ENCODE measurements at regions of chr17 and their contacts with region 1.

Region 1: DNA sequence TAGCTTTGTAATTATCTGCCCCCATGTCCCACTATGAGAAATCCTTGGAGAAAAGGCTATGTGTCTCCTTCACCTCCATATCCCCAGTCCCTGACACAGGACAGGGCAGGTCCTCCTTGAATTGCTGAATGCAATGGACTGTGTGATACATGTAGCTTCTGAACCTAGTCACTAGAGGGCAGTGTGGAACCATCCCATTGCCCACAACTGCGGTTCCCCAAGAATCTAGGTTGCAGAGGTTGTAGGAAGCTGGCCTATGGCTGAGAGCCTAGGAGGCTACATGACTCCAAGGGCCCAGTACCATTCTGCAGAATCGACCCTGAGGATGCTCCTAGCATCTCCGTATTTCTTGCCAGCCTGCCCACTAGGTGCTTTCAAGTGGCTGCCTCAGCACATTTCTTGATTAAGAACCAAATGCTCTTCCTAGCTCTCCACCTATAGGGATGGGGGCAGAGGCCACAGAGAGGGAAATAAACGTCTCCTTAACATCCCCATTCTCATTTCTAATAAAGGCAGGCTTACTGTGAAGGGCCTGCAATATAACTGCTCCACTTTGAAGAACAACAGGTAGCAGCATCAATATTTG is 394.0 kb downstream of the CA10 start:
- DNase-seq: peak; percentile 76
- H3K4me3 ChIP-seq: no peak overlapping the region
- H3K27ac ChIP-seq: no peak overlapping the region
- H3K4me1 ChIP-seq: peaks cover 0 to 3% of the 10 kb centered on the region in 2 experiments; a peak in 1 of 4 replicates
- H3K27me3 ChIP-seq: no peaks in the 10 kb centered on the region
- CTCF ChIP-seq: peak; percentile 96
- EP300 ChIP-seq: no peak
- RAD21 ChIP-seq: peak; percentile 97

Region 2: DNA sequence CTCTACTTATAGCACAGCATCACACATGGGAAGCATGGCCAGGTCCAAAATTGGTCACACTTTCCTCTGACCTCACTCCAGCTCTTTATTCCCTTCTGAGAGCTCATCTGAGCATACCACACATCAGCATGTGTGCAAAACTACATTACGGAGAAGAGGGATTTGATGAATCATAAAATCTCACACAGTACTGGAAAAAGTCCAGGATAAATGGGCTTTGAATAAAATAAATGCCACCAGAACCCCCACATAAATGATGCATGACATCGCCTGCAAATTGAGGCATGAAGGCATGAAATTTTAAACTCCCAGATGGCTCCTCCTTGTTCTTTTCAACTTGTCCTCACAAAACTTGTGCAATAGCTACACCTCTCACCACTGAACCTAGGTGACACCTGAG is 45.5 kb before region 1 on chr17:
- CTCF ChIA-PET with region 1: no interaction called
- POLR2A ChIA-PET with region 1: no interaction called
- DNase-seq: no peak
- H3K4me3 ChIP-seq: no peak overlapping the region
- H3K27ac ChIP-seq: no peak overlapping the region
- H3K4me1 ChIP-seq: peaks cover 0 to 3% of the 10 kb centered on the region in 2 experiments; a peak in 1 of 4 replicates
- H3K27me3 ChIP-seq: no peaks in the 10 kb centered on the region
- CTCF ChIP-seq: no peak
- EP300 ChIP-seq: no peak
- RAD21 ChIP-seq: no peak

Region 3: GRCh38 chr17:51748749-51749539 is 15.5 kb before region 1 on chr17:
- CTCF ChIA-PET with region 1: interaction called, 37 read pairs
- POLR2A ChIA-PET with region 1: no interaction called
- DNase-seq: no peak
- H3K4me3 ChIP-seq: no peak overlapping the region
- H3K27ac ChIP-seq: no peak overlapping the region
- H3K4me1 ChIP-seq: peaks cover 0 to 6% of the 10 kb centered on the region in 2 experiments; a peak in 2 of 4 replicates
- H3K27me3 ChIP-seq: no peaks in the 10 kb centered on the region
- CTCF ChIP-seq: no peak
- EP300 ChIP-seq: no peak
- RAD21 ChIP-seq: no peak

Region 4: GRCh38 chr17:51793686-51794085 is 29.2 kb after region 1 on chr17:
- CTCF ChIA-PET with region 1: interaction called, 11 read pairs
- POLR2A ChIA-PET with region 1: no interaction called
- DNase-seq: no peak
- H3K4me3 ChIP-seq: no peak overlapping the region
- H3K27ac ChIP-seq: no peak overlapping the region
- H3K4me1 ChIP-seq: no peaks in the 10 kb centered on the region
- H3K27me3 ChIP-seq: no peaks in the 10 kb centered on the region
- CTCF ChIP-seq: no peak
- EP300 ChIP-seq: no peak
- RAD21 ChIP-seq: no peak

Region 5: GRCh38 chr17:51813140-51813783 is 48.8 kb after region 1 on chr17:
- CTCF ChIA-PET with region 1: interaction called, 11 read pairs
- POLR2A ChIA-PET with region 1: no interaction called
- DNase-seq: no peak
- H3K4me3 ChIP-seq: no peak overlapping the region
- H3K27ac ChIP-seq: no peak overlapping the region
- H3K4me1 ChIP-seq: no peaks in the 10 kb centered on the region
- H3K27me3 ChIP-seq: no peaks in the 10 kb centered on the region
- CTCF ChIP-seq: no peak
- EP300 ChIP-seq: no peak
- RAD21 ChIP-seq: no peak

Region 6: GRCh38 chr17:51860954-51861561 is 96.6 kb after region 1 on chr17:
- CTCF ChIA-PET with region 1: interaction called, 22 read pairs
- POLR2A ChIA-PET with region 1: no interaction called
- DNase-seq: peak; percentile 50
- H3K4me3 ChIP-seq: no peak overlapping the region; a peak in 1 of 4 replicates
- H3K27ac ChIP-seq: no peak overlapping the region
- H3K4me1 ChIP-seq: peaks cover 0 to 11% of the 10 kb centered on the region in 2 experiments; a peak in 2 of 4 replicates
- H3K27me3 ChIP-seq: no peaks in the 10 kb centered on the region
- CTCF ChIP-seq: peak; percentile 74
- EP300 ChIP-seq: no peak
- RAD21 ChIP-seq: peak; percentile 82

Region 7: GRCh38 chr17:52120465-52120864 is 356.0 kb after region 1 on chr17:
- CTCF ChIA-PET with region 1: interaction called, 44 read pairs
- POLR2A ChIA-PET with region 1: no interaction called
- DNase-seq: no peak
- H3K4me3 ChIP-seq: no peak overlapping the region; a peak in 1 of 4 replicates
- H3K27ac ChIP-seq: no peak overlapping the region
- H3K4me1 ChIP-seq: no peaks in the 10 kb centered on the region; a peak in 1 of 4 replicates
- H3K27me3 ChIP-seq: no peaks in the 10 kb centered on the region
- CTCF ChIP-seq: no peak
- EP300 ChIP-seq: no peak
- RAD21 ChIP-seq: no peak

Measured in SK-N-SH (cell line).